CD8-positive, alpha-beta T cell (primary cell): ENCODE measurements at regions of chrX and their contacts with region 1.

Region 1: DNA sequence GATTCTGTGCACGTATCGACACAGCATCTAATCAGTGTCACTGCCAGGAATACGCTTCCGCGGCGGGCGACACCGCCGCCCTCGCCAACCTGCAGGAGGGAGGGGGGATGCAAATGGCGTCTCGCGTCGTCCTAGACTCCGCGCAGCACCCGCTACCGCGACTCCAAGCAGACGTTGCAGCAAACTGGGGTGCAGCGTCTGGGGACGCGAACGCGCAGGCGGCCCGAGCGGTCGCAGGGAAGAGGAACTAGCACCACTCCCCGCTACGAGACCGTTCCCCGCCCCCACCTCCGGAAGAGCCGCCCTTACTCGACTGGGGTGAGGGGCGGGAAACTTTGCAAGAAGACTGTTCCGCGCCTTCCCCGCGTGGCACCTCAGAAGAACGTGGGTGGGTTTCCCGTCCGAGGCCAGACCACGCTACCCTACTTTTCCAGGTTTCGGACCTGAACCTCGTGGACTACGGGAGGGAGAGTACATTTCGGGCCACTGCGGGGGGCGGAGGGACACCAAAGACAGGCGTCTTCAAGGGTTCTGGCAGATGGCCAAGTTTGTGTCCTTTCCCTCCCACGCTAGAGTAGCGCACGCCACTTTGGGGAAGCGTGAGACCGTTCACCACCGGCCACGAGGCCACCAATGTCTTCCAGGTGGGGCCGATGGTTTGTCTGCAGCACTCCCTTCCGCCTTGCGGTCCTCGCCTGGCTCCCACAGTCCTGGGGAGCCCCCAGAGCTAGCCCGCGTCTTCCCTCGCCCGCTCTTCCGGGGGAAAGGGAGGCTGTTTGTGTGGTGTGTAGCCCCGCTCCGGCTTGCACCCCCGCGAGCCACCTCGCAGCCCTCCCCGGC is 78.0 kb upstream of the BCOR start:
- DNase-seq: peak; percentile 52 to 90 (median 76)
- ATAC-seq: peak; percentile 50
- H3K4me3 ChIP-seq: peak overlapping the region; percentile 47 to 65
- H3K4me3 Mint-ChIP-seq: peak overlapping the region; percentile 88
- H3K27ac ChIP-seq: peak overlapping the region; percentile 73 to 95
- H3K27ac Mint-ChIP-seq: peak overlapping the region; percentile 97
- H3K4me1 ChIP-seq: peaks cover 30% of the 10 kb centered on the region
- H3K4me1 Mint-ChIP-seq: peaks cover 39% of the 10 kb centered on the region
- H3K27me3 ChIP-seq: no peaks in the 10 kb centered on the region
- H3K27me3 Mint-ChIP-seq: no peaks in the 10 kb centered on the region
- CTCF ChIP-seq: no peak

Region 2: GRCh38 chrX:38811515-38812243 is 1364.1 kb before region 1 on chrX:
- CTCF ChIA-PET with region 1: no interaction called
- POLR2A ChIA-PET with region 1: no interaction called
- intact Hi-C with region 1: loop called in 1 of 2 experiments (anchors 5 kb)
- DNase-seq: peak in 3 of 9 experiments; percentile 20 to 71 (median 53)
- ATAC-seq: peak; percentile 74
- H3K4me3 ChIP-seq: no peak overlapping the region
- H3K4me3 Mint-ChIP-seq: peak overlapping the region; percentile 74
- H3K27ac ChIP-seq: peak overlapping the region; percentile 30 to 38
- H3K27ac Mint-ChIP-seq: peak overlapping the region; percentile 93
- H3K4me1 ChIP-seq: peaks cover 57% of the 10 kb centered on the region
- H3K4me1 Mint-ChIP-seq: peaks cover 56% of the 10 kb centered on the region
- H3K27me3 ChIP-seq: no peaks in the 10 kb centered on the region
- H3K27me3 Mint-ChIP-seq: no peaks in the 10 kb centered on the region
- CTCF ChIP-seq: no peak

Region 3: DNA sequence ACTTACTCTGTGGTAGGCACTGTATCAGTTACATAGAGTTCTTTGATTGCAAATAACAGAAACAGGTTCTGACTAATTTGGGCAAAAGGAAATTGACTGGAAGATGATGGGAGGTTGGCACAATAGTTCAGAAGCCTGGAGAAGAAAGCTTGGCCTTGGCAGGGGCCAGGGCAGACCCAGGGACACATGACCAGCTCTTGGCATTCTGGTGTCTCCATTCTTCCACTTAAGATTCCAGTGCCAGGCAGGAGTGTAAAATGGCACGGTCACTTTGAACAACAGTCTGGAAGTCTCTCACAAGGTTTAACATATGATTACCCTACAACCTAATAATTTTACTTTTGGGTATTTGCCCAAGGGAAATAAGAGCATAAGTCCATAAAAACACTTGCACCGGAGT is 253.9 kb before region 1 on chrX:
- CTCF ChIA-PET with region 1: no interaction called
- POLR2A ChIA-PET with region 1: no interaction called
- intact Hi-C with region 1: no loop called
- DNase-seq: no peak
- ATAC-seq: no peak
- H3K4me3 ChIP-seq: no peak overlapping the region
- H3K4me3 Mint-ChIP-seq: no peak overlapping the region
- H3K27ac ChIP-seq: no peak overlapping the region
- H3K27ac Mint-ChIP-seq: no peak overlapping the region
- H3K4me1 ChIP-seq: no peaks in the 10 kb centered on the region
- H3K4me1 Mint-ChIP-seq: no peaks in the 10 kb centered on the region
- H3K27me3 ChIP-seq: no peaks in the 10 kb centered on the region
- H3K27me3 Mint-ChIP-seq: no peaks in the 10 kb centered on the region
- CTCF ChIP-seq: no peak

Region 4: GRCh38 chrX:40108959-40109287 is 66.8 kb before region 1 on chrX:
- CTCF ChIA-PET with region 1: no interaction called
- POLR2A ChIA-PET with region 1: interaction called, 10 read pairs
- intact Hi-C with region 1: loop called in 1 of 2 experiments (anchors 2 kb)
- DNase-seq: peak; percentile 26 to 85 (median 69)
- ATAC-seq: peak; percentile 57
- H3K4me3 ChIP-seq: peak overlapping the region; percentile 37 to 40
- H3K4me3 Mint-ChIP-seq: peak overlapping the region; percentile 64
- H3K27ac ChIP-seq: no peak overlapping the region
- H3K27ac Mint-ChIP-seq: no peak overlapping the region
- H3K4me1 ChIP-seq: peaks cover 15% of the 10 kb centered on the region
- H3K4me1 Mint-ChIP-seq: peaks cover 13% of the 10 kb centered on the region
- H3K27me3 ChIP-seq: no peaks in the 10 kb centered on the region
- H3K27me3 Mint-ChIP-seq: no peaks in the 10 kb centered on the region
- CTCF ChIP-seq: no peak

Region 5: GRCh38 chrX:40201329-40201885 is 25.7 kb after region 1 on chrX:
- CTCF ChIA-PET with region 1: no interaction called
- POLR2A ChIA-PET with region 1: interaction called, 3 read pairs
- intact Hi-C with region 1: loop called in 1 of 2 experiments (anchors 1 kb)
- DNase-seq: peak in 5 of 9 experiments; percentile 2 to 77 (median 41)
- ATAC-seq: peak; percentile 95
- H3K4me3 ChIP-seq: no peak overlapping the region
- H3K4me3 Mint-ChIP-seq: no peak overlapping the region
- H3K27ac ChIP-seq: peak overlapping the region in 1 of 2 experiments; percentile 66
- H3K27ac Mint-ChIP-seq: peak overlapping the region; percentile 82
- H3K4me1 ChIP-seq: peaks cover 12% of the 10 kb centered on the region
- H3K4me1 Mint-ChIP-seq: peaks cover 18% of the 10 kb centered on the region
- H3K27me3 ChIP-seq: no peaks in the 10 kb centered on the region
- H3K27me3 Mint-ChIP-seq: no peaks in the 10 kb centered on the region
- CTCF ChIP-seq: no peak

Region 6: DNA sequence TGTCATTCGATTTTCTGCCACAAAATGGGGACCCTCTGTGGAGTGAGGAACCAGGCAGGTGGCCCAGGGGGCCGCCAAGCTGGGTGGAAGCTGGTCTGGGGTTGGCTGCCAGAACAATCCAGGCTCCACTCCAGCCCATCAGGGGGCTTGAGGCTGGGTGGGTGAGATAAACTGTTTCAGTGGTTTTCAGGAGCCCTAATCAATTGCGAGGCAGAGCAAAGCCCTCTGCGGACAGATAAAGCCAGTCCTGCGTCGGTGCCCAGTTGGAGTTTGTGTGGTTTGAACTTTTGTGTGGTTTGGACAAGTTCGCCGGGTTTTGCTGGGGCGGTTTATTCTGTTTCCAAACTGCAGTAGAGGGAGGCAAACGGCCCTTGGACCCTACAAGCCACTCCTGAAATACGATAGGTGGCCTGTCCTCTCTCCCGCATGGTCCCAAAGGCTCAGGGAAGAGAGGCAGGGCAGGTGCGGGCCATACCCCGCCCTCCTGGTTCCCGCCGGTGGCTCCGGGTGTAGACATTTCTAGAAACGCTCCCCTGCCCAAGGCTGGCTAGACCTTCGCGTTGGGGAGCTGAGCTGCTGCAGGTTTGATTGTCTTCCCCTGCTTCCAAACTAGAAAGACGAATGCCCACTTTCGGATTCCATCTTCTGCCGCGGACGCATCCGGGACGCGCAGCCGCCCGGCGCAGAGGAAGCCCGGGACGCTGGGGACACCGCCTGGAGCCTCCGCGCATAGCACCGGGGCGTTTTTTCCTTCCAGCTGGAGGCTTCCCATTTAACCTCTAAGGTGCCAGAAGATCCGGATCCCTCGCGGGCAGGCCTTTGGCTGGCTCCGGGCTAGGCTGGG is 91.0 kb after region 1 on chrX:
- CTCF ChIA-PET with region 1: interaction called, 3 read pairs
- POLR2A ChIA-PET with region 1: interaction called, 7 read pairs
- intact Hi-C with region 1: loop called in 1 of 2 experiments (anchors 2 kb)
- DNase-seq: peak; percentile 10 to 72 (median 46)
- ATAC-seq: peak; percentile 89
- H3K4me3 ChIP-seq: peak overlapping the region; percentile 57 to 65
- H3K4me3 Mint-ChIP-seq: peak overlapping the region; percentile 79
- H3K27ac ChIP-seq: no peak overlapping the region
- H3K27ac Mint-ChIP-seq: no peak overlapping the region
- H3K4me1 ChIP-seq: peaks cover 11% of the 10 kb centered on the region
- H3K4me1 Mint-ChIP-seq: peaks cover 6% of the 10 kb centered on the region
- H3K27me3 ChIP-seq: no peaks in the 10 kb centered on the region
- H3K27me3 Mint-ChIP-seq: no peaks in the 10 kb centered on the region
- CTCF ChIP-seq: peak; percentile 41